Caco-2 (cell line): ENCODE measurements at regions of chr11 and their contacts with region 1.

Region 1: GRCh38 chr11:67353317-67354074 is at the start of gene POLD4:
- DNase-seq: peak; percentile 99 to 100
- H3K4me3 ChIP-seq: peak within 1 kb of the TSS; percentile 50
- H3K4me3 Mint-ChIP-seq: peak within 1 kb of the TSS; percentile 83
- H3K27ac Mint-ChIP-seq: peak within 1 kb of the TSS; percentile 81
- H3K4me1 ChIP-seq: peaks cover 51% of the 10 kb centered on the region
- H3K4me1 Mint-ChIP-seq: peaks cover 27% of the 10 kb centered on the region
- H3K27me3 ChIP-seq: no peaks in the 10 kb centered on the region
- H3K27me3 Mint-ChIP-seq: no peaks in the 10 kb centered on the region
- CTCF ChIP-seq: no peak
- total RNA-seq, gene POLD4: 29.8 and 30.8 TPM in 2 replicates

Region 2: GRCh38 chr11:67382276-67383136 is 29.0 kb after region 1 on chr11:
- CTCF ChIA-PET with region 1: interaction called, 775 read pairs
- POLR2A ChIA-PET with region 1: interaction called, 8 read pairs
- intact Hi-C with region 1: loop called (anchors 1 kb)
- DNase-seq: peak; percentile 90 to 94
- H3K4me3 ChIP-seq: no peak overlapping the region
- H3K4me3 Mint-ChIP-seq: no peak overlapping the region
- H3K27ac Mint-ChIP-seq: no peak overlapping the region
- H3K4me1 ChIP-seq: peaks cover 14% of the 10 kb centered on the region
- H3K4me1 Mint-ChIP-seq: peaks cover 6% of the 10 kb centered on the region
- H3K27me3 ChIP-seq: 0 out of 2 replicates have a peak, but pooled peaks cover 3% of the 10 kb centered on the region
- H3K27me3 Mint-ChIP-seq: peaks cover 7% of the 10 kb centered on the region
- CTCF ChIP-seq: peak; percentile 99 to 100

Region 3: DNA sequence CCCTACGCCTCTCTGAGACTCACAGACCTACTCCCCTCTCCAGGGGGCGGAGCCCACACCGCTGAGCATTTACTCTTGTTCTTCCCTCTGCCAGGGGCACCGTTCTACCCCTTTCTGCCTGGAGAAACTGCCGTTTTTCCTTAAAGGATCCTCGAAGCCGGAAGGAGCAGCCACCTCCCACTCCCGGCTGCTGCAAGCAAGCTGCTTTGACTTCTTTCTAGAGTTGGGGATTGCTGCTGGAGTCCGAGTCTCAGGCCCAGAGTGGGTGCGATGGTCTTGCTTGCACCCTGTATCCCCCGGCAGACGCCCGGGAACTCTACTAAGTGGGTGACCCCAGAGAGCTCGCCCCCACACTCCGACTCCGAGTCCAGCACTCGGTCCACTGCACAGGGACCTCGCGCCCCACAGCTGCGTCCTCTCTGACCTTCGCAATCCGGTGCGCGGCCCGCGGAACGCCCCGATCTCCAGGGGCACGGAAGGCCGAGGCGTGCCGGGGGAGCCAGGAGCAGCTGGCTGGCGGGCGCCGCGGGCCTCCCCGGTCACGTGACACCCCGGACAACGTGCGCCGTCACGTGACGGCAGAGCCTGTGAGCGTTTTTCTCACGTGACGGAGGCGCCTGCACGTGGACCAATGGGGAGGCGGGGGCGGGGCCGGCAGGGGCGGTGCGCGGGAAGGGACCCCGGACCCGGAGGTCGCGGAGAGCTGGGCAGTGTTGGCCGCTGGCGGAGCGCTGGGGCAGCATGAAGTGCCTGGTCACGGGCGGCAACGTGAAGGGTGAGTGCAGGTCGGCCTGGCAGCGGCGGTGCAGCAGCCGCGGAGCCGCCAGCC is 38.0 kb after region 1 on chr11 and contains the start of gene RAD9A:
- CTCF ChIA-PET with region 1: interaction called, 775 read pairs
- POLR2A ChIA-PET with region 1: interaction called, 10 read pairs
- intact Hi-C with region 1: no loop called
- DNase-seq: peak; percentile 98 to 99
- H3K4me3 ChIP-seq: peak within 1 kb of the TSS; percentile 80
- H3K4me3 Mint-ChIP-seq: peak within 1 kb of the TSS; percentile 76
- H3K27ac Mint-ChIP-seq: peak within 1 kb of the TSS; percentile 63
- H3K4me1 ChIP-seq: peaks cover 5% of the 10 kb centered on the region; the same call in 1 of the 2 replicates
- H3K4me1 Mint-ChIP-seq: peaks cover 23% of the 10 kb centered on the region
- H3K27me3 ChIP-seq: no peaks in the 10 kb centered on the region
- H3K27me3 Mint-ChIP-seq: no peaks in the 10 kb centered on the region
- CTCF ChIP-seq: no peak
- total RNA-seq, gene RAD9A: 55.1 and 63.5 TPM in 2 replicates

Region 4: GRCh38 chr11:67439321-67439883 is 85.9 kb after region 1 on chr11:
- CTCF ChIA-PET with region 1: no interaction called
- POLR2A ChIA-PET with region 1: no interaction called
- intact Hi-C with region 1: loop called (anchors 1 kb)
- DNase-seq: peak in 1 of 2 experiments; percentile 68
- H3K4me3 ChIP-seq: no peak overlapping the region
- H3K4me3 Mint-ChIP-seq: peak overlapping the region; percentile 2
- H3K27ac Mint-ChIP-seq: peak overlapping the region; percentile 9
- H3K4me1 ChIP-seq: peaks cover 14% of the 10 kb centered on the region
- H3K4me1 Mint-ChIP-seq: no peaks in the 10 kb centered on the region
- H3K27me3 ChIP-seq: no peaks in the 10 kb centered on the region
- H3K27me3 Mint-ChIP-seq: no peaks in the 10 kb centered on the region
- CTCF ChIP-seq: peak in 1 of 2 experiments; percentile 38

Region 5: DNA sequence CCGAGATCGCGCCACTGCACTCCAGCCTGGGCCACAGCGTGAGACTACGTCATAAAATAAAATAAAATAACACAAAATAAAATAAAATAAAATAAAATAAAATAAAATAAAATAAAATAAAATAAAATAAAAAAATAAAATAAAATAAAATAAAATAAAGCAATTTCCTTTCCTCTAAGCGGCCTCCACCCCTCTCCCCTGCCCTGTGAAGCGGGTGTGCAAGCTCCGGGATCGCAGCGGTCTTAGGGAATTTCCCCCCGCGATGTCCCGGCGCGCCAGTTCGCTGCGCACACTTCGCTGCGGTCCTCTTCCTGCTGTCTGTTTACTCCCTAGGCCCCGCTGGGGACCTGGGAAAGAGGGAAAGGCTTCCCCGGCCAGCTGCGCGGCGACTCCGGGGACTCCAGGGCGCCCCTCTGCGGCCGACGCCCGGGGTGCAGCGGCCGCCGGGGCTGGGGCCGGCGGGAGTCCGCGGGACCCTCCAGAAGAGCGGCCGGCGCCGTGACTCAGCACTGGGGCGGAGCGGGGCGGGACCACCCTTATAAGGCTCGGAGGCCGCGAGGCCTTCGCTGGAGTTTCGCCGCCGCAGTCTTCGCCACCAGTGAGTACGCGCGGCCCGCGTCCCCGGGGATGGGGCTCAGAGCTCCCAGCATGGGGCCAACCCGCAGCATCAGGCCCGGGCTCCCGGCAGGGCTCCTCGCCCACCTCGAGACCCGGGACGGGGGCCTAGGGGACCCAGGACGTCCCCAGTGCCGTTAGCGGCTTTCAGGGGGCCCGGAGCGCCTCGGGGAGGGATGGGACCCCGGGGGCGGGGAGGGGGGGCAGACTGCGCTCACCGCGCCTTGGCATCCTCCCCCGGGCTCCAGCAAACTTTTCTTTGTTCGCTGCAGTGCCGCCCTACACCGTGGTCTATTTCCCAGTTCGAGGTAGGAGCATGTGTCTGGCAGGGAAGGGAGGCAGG is 230.0 kb after region 1 on chr11 and contains the start of gene GSTP1:
- CTCF ChIA-PET with region 1: interaction called, 3 read pairs
- POLR2A ChIA-PET with region 1: no interaction called
- intact Hi-C with region 1: loop called (anchors 5 kb)
- DNase-seq: peak; percentile 93 to 98
- H3K4me3 ChIP-seq: peak within 1 kb of the TSS; percentile 87
- H3K4me3 Mint-ChIP-seq: peak within 1 kb of the TSS; percentile 75
- H3K27ac Mint-ChIP-seq: peak within 1 kb of the TSS; percentile 85
- H3K4me1 ChIP-seq: peaks cover 48% of the 10 kb centered on the region
- H3K4me1 Mint-ChIP-seq: peaks cover 61% of the 10 kb centered on the region
- H3K27me3 ChIP-seq: no peaks in the 10 kb centered on the region
- H3K27me3 Mint-ChIP-seq: no peaks in the 10 kb centered on the region
- CTCF ChIP-seq: peak; percentile 62 to 93
- total RNA-seq, gene GSTP1: 1,799 and 1,911 TPM in 2 replicates